CD8-positive, alpha-beta T cell (primary cell): ENCODE measurements at regions of chr16 and their contacts with region 1.

Region 1: GRCh38 chr16:57185944-57186871 is at the starts of genes PSME3IP1 and RSPRY1:
- DNase-seq: peak; percentile 96 to 100 (median 98)
- ATAC-seq: peak; percentile 82
- H3K4me3 ChIP-seq: peak within 1 kb of the TSS; percentile 92 to 100
- H3K4me3 Mint-ChIP-seq: peak within 1 kb of the TSS; percentile 99
- H3K27ac ChIP-seq: peak within 1 kb of the TSS; percentile 84 to 94
- H3K27ac Mint-ChIP-seq: peak within 1 kb of the TSS; percentile 98
- H3K4me1 ChIP-seq: peaks cover 34% of the 10 kb centered on the region
- H3K4me1 Mint-ChIP-seq: peaks cover 58% of the 10 kb centered on the region
- H3K27me3 ChIP-seq: no peaks in the 10 kb centered on the region
- H3K27me3 Mint-ChIP-seq: no peaks in the 10 kb centered on the region
- CTCF ChIP-seq: no peak
- total RNA-seq, gene PSME3IP1: 82.6 to 87.2 TPM
- total RNA-seq, gene RSPRY1: 22.4 to 23.2 TPM

Region 2: DNA sequence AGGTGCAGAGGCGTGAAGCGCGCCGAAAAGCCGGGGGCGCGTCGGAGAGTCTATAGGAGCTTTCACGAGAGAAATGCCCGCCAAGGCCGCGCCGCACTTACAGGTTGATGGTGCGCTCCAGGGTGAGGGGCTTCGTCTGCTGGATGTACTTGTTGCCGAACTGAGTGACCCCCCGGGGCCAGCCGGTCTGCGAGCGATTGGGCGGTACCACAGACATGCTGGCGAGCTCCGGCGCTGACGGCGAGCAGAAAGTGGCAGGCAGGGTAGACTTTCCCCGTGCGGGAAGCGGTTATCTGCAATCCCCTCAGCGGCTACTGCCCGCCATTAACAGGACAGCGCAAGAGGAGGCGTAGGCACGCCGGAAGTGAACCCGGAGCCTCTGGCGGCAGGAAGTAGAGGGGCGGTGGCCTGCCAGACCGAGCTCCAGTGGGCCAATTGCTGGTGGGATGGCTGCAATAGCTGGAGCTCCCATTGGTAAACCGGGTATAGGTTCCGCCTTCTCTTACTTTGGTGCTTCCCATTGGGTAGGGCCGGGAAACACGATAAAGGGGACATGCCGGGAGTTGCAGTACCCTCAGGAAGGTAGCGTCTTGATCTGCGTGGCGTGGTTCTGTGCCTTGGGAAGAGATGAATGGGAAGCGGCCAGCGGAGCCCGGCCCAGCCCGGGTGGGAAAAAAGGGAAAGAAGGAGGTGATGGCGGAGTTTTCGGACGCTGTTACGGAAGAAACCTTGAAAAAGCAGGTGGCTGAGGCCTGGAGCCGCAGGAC is 735.0 kb before region 1 on chr16 and contains the starts of genes NUDT21 and OGFOD1:
- CTCF ChIA-PET with region 1: no interaction called
- POLR2A ChIA-PET with region 1: no interaction called
- intact Hi-C with region 1: loop called in 1 of 2 experiments (anchors 5 kb)
- DNase-seq: peak; percentile 82 to 98 (median 90)
- ATAC-seq: peak; percentile 98
- H3K4me3 ChIP-seq: peak within 1 kb of the TSS; percentile 85 to 87
- H3K4me3 Mint-ChIP-seq: peak within 1 kb of the TSS; percentile 97
- H3K27ac ChIP-seq: peak within 1 kb of the TSS; percentile 76 to 77
- H3K27ac Mint-ChIP-seq: peak within 1 kb of the TSS; percentile 94
- H3K4me1 ChIP-seq: peaks cover 31% of the 10 kb centered on the region
- H3K4me1 Mint-ChIP-seq: peaks cover 60% of the 10 kb centered on the region
- H3K27me3 ChIP-seq: no peaks in the 10 kb centered on the region
- H3K27me3 Mint-ChIP-seq: no peaks in the 10 kb centered on the region
- CTCF ChIP-seq: no peak
- total RNA-seq, gene NUDT21: 99.1 to 106 TPM
- total RNA-seq, gene OGFOD1: 17.0 to 21.5 TPM

Region 3: GRCh38 chr16:56729735-56730662 is 456.2 kb before region 1 on chr16 and contains the start of gene NUP93:
- CTCF ChIA-PET with region 1: no interaction called
- POLR2A ChIA-PET with region 1: interaction called, 4 read pairs
- intact Hi-C with region 1: loop called in 1 of 2 experiments (anchors 5 kb)
- DNase-seq: peak; percentile 76 to 94 (median 90)
- ATAC-seq: peak; percentile 94
- H3K4me3 ChIP-seq: peak within 1 kb of the TSS; percentile 79 to 87
- H3K4me3 Mint-ChIP-seq: no peak within 1 kb of the TSS
- H3K27ac ChIP-seq: peak within 1 kb of the TSS; percentile 58 to 81
- H3K27ac Mint-ChIP-seq: peak within 1 kb of the TSS; percentile 90
- H3K4me1 ChIP-seq: peaks cover 34% of the 10 kb centered on the region
- H3K4me1 Mint-ChIP-seq: peaks cover 23% of the 10 kb centered on the region
- H3K27me3 ChIP-seq: no peaks in the 10 kb centered on the region
- H3K27me3 Mint-ChIP-seq: no peaks in the 10 kb centered on the region
- CTCF ChIP-seq: no peak
- total RNA-seq, gene NUP93: 68.2 to 68.5 TPM

Region 4: GRCh38 chr16:57061084-57061905 is 124.9 kb before region 1 on chr16:
- CTCF ChIA-PET with region 1: no interaction called
- POLR2A ChIA-PET with region 1: no interaction called
- intact Hi-C with region 1: no loop called
- DNase-seq: no peak
- ATAC-seq: no peak
- H3K4me3 ChIP-seq: no peak overlapping the region
- H3K4me3 Mint-ChIP-seq: no peak overlapping the region
- H3K27ac ChIP-seq: peak overlapping the region; percentile 1 to 27
- H3K27ac Mint-ChIP-seq: peak overlapping the region; percentile 89
- H3K4me1 ChIP-seq: peaks cover 14% of the 10 kb centered on the region
- H3K4me1 Mint-ChIP-seq: peaks cover 29% of the 10 kb centered on the region
- H3K27me3 ChIP-seq: no peaks in the 10 kb centered on the region
- H3K27me3 Mint-ChIP-seq: no peaks in the 10 kb centered on the region
- CTCF ChIP-seq: no peak

Region 5: DNA sequence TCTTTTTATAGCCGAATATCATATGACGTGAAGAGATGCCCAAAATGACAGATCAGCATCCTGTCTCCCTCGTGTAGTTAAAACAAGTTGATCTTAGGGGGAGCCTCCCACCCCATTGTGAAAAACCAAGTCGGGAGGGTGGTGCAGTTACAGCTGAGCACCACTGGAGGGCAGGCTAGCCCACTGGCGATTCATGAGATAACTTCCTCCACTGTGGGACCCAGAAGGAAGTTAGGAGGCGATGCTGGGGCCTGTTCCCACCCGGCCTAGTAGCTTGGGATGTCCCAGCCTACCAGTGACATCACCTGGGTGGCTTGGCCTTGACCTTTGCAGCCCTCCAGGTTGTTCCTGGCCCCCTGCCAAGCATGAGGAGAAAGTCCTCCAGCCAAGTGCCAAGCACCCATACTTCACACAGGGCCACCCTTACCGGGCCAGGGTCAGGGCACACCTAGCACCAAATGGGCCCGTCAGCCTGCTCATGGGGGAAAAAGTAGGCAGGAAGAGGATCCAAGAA is 101.9 kb before region 1 on chr16:
- CTCF ChIA-PET with region 1: interaction called, 14 read pairs
- POLR2A ChIA-PET with region 1: interaction called, 4 read pairs
- intact Hi-C with region 1: loop called in 1 of 2 experiments (anchors 5 kb)
- DNase-seq: peak; percentile 58 to 92 (median 80)
- ATAC-seq: peak; percentile 98
- H3K4me3 ChIP-seq: no peak overlapping the region
- H3K4me3 Mint-ChIP-seq: no peak overlapping the region
- H3K27ac ChIP-seq: peak overlapping the region; percentile 59 to 69
- H3K27ac Mint-ChIP-seq: peak overlapping the region; percentile 92
- H3K4me1 ChIP-seq: peaks cover 11% of the 10 kb centered on the region
- H3K4me1 Mint-ChIP-seq: peaks cover 14% of the 10 kb centered on the region
- H3K27me3 ChIP-seq: no peaks in the 10 kb centered on the region
- H3K27me3 Mint-ChIP-seq: no peaks in the 10 kb centered on the region
- CTCF ChIP-seq: peak; percentile 96

Region 6: GRCh38 chr16:57226701-57227621 is 40.8 kb after region 1 on chr16:
- CTCF ChIA-PET with region 1: no interaction called
- POLR2A ChIA-PET with region 1: no interaction called
- intact Hi-C with region 1: no loop called
- DNase-seq: no peak
- ATAC-seq: no peak
- H3K4me3 ChIP-seq: no peak overlapping the region
- H3K4me3 Mint-ChIP-seq: no peak overlapping the region
- H3K27ac ChIP-seq: no peak overlapping the region
- H3K27ac Mint-ChIP-seq: no peak overlapping the region
- H3K4me1 ChIP-seq: no peaks in the 10 kb centered on the region
- H3K4me1 Mint-ChIP-seq: no peaks in the 10 kb centered on the region
- H3K27me3 ChIP-seq: no peaks in the 10 kb centered on the region
- H3K27me3 Mint-ChIP-seq: no peaks in the 10 kb centered on the region
- CTCF ChIP-seq: no peak

Region 7: GRCh38 chr16:57244767-57245471 is 58.7 kb after region 1 on chr16 and contains the start of gene ARL2BP:
- CTCF ChIA-PET with region 1: no interaction called
- POLR2A ChIA-PET with region 1: interaction called, 4 read pairs
- intact Hi-C with region 1: loop called (anchors 1 kb)
- DNase-seq: peak; percentile 92 to 98 (median 97)
- ATAC-seq: peak; percentile 95
- H3K4me3 ChIP-seq: peak within 1 kb of the TSS; percentile 68 to 76
- H3K4me3 Mint-ChIP-seq: peak within 1 kb of the TSS; percentile 92
- H3K27ac ChIP-seq: peak within 1 kb of the TSS; percentile 50 to 87
- H3K27ac Mint-ChIP-seq: peak within 1 kb of the TSS; percentile 96
- H3K4me1 ChIP-seq: peaks cover 9% of the 10 kb centered on the region
- H3K4me1 Mint-ChIP-seq: peaks cover 19% of the 10 kb centered on the region
- H3K27me3 ChIP-seq: no peaks in the 10 kb centered on the region
- H3K27me3 Mint-ChIP-seq: no peaks in the 10 kb centered on the region
- CTCF ChIP-seq: no peak
- total RNA-seq, gene ARL2BP: 32.8 to 35.2 TPM

Region 8: GRCh38 chr16:57447186-57447962 is 261.2 kb after region 1 on chr16 and contains the starts of genes CIAPIN1 and COQ9:
- CTCF ChIA-PET with region 1: no interaction called
- POLR2A ChIA-PET with region 1: interaction called, 12 read pairs
- intact Hi-C with region 1: loop called in 1 of 2 experiments (anchors 2 kb)
- DNase-seq: peak; percentile 85 to 97 (median 92)
- ATAC-seq: peak; percentile 98
- H3K4me3 ChIP-seq: peak within 1 kb of the TSS; percentile 93 to 96
- H3K4me3 Mint-ChIP-seq: peak within 1 kb of the TSS; percentile 91
- H3K27ac ChIP-seq: peak within 1 kb of the TSS; percentile 79 to 83
- H3K27ac Mint-ChIP-seq: peak within 1 kb of the TSS; percentile 93
- H3K4me1 ChIP-seq: peaks cover 20% of the 10 kb centered on the region
- H3K4me1 Mint-ChIP-seq: peaks cover 53% of the 10 kb centered on the region
- H3K27me3 ChIP-seq: no peaks in the 10 kb centered on the region
- H3K27me3 Mint-ChIP-seq: no peaks in the 10 kb centered on the region
- CTCF ChIP-seq: no peak
- total RNA-seq, gene CIAPIN1: 28.6 to 29.7 TPM
- total RNA-seq, gene COQ9: 8.1 to 11.7 TPM

Region 9: DNA sequence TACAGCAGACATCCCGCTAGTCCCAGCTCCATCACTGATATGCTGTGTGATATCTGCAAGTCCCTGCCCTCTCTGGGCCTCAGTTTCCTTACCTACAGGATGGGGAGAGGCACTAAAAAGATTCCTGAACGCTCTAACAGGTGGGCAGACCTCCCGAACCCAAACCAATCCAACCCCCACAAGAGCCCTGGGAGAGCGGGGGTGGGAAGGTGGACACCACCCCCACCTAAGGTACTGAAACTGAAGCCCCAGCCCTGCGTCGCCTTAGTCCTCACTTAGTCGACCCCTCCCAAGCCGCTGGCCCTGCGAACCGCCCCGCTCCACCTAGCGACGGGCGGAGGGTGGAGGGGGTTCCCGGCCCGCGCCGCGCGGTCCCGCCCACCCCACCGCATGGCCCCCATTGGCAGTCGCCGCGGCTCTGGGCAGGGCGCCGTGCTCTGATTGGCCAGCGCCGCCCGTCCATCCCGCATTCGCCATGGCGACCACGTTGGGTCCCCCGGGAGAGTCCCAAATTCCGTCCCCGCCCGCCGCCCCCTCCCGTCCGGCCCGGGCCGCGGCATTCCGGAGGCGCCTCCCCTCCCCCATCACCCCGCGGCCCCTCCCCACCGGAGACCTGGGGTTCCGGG is 349.6 kb after region 1 on chr16:
- CTCF ChIA-PET with region 1: no interaction called
- POLR2A ChIA-PET with region 1: no interaction called
- intact Hi-C with region 1: loop called in 1 of 2 experiments (anchors 5 kb)
- DNase-seq: peak; percentile 83 to 97 (median 92)
- ATAC-seq: peak; percentile 82
- H3K4me3 ChIP-seq: peak overlapping the region; percentile 69 to 80
- H3K4me3 Mint-ChIP-seq: peak overlapping the region; percentile 81
- H3K27ac ChIP-seq: peak overlapping the region; percentile 64 to 96
- H3K27ac Mint-ChIP-seq: peak overlapping the region; percentile 96
- H3K4me1 ChIP-seq: peaks cover 81% of the 10 kb centered on the region
- H3K4me1 Mint-ChIP-seq: peaks cover 70% of the 10 kb centered on the region
- H3K27me3 ChIP-seq: no peaks in the 10 kb centered on the region
- H3K27me3 Mint-ChIP-seq: no peaks in the 10 kb centered on the region
- CTCF ChIP-seq: no peak